ENCODE measurements at regions of chr6 and their contacts with region 1.

Region 1: GRCh38 chr6:137102851-137103492 is 58.2 kb upstream of the IL20RA start:
- DNase-seq: peak; percentile 100
- ATAC-seq: peak; percentile 82
- H3K4me3 ChIP-seq: no peak overlapping the region
- H3K27ac ChIP-seq: peak overlapping the region; percentile 98
- H3K4me1 ChIP-seq: peaks cover 73% of the 10 kb centered on the region
- H3K27me3 ChIP-seq: no peaks in the 10 kb centered on the region
- CTCF ChIP-seq: no peak
- EP300 ChIP-seq: peak; percentile 97
- POLR2A ChIP-seq: peak; percentile 65
- RAD21 ChIP-seq: peak; percentile 44

Region 2: GRCh38 chr6:137089305-137089704 is 13.7 kb before region 1 on chr6:
- CTCF ChIA-PET with region 1: interaction called, 71 read pairs
- POLR2A ChIA-PET with region 1: interaction called, 8 read pairs
- RAD21 ChIA-PET with region 1: interaction called, 126 read pairs
- SMC1A ChIA-PET with region 1: interaction called, 110 read pairs
- in situ Hi-C with region 1: no loop called
- intact Hi-C with region 1: no loop called
- DNase-seq: no peak
- ATAC-seq: no peak
- H3K4me3 ChIP-seq: no peak overlapping the region
- H3K27ac ChIP-seq: no peak overlapping the region
- H3K4me1 ChIP-seq: peaks cover 39% of the 10 kb centered on the region
- H3K27me3 ChIP-seq: no peaks in the 10 kb centered on the region
- CTCF ChIP-seq: no peak
- EP300 ChIP-seq: no peak
- POLR2A ChIP-seq: no peak
- RAD21 ChIP-seq: no peak

Region 3: DNA sequence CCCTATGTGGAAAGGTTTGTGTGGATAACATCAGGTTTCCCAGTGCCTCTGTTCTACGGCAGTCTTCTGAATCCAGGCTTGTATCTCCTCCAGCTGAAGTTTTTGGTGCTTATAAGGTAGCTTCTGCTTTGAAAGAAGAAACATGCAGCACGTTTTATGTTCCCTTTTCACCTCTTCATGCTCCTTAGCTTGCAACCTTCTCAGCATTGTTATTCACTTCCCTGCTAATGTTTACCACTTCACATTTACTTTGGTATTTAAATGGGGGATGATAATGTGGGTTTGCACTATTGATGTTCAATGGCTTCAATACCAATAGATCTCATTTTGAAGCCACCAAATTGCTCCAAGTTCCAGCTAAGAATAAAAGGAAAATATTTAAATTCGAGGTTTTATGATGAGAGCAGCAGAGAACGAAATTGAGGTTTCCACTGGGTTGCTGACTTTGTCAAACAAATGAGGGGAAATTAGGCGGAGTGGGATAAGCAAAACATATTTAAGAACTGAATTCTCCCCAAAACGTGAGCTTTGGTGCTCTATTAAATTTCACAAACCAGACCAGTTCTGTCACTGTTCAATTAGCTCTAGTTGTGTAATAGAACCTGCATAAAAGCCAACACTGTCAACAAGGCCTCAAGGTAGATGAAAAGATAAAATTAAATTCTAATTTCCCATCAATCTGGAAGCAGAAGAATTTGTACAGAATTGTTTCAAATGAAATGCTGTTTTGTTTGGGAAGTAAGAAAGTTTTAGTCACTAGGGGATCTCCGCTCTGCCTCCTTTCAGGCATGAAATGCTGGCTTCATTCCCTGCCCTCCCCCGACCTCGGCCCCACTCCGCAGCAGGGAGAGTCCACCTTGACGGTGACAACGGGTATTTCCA is 69.1 kb after region 1 on chr6:
- CTCF ChIA-PET with region 1: interaction called, 160 read pairs
- POLR2A ChIA-PET with region 1: interaction called, 62 read pairs
- RAD21 ChIA-PET with region 1: interaction called, 500 read pairs
- SMC1A ChIA-PET with region 1: interaction called, 293 read pairs
- in situ Hi-C with region 1: loop called (anchors 5 kb)
- intact Hi-C with region 1: no loop called
- DNase-seq: peak; percentile 68
- ATAC-seq: peak; percentile 86
- H3K4me3 ChIP-seq: 0 out of 2 replicates have a peak overlapping the region, but pooled peaks have one; percentile 1
- H3K27ac ChIP-seq: peak overlapping the region; percentile 84
- H3K4me1 ChIP-seq: peaks cover 51% of the 10 kb centered on the region
- H3K27me3 ChIP-seq: no peaks in the 10 kb centered on the region
- CTCF ChIP-seq: no peak
- EP300 ChIP-seq: peak; percentile 51 to 64; a peak in 1 of 4 replicates
- POLR2A ChIP-seq: 0 out of 2 replicates have a peak, but pooled peaks have one; percentile 31
- RAD21 ChIP-seq: peak; percentile 18; the same call in 1 of the 2 replicates

Region 4: DNA sequence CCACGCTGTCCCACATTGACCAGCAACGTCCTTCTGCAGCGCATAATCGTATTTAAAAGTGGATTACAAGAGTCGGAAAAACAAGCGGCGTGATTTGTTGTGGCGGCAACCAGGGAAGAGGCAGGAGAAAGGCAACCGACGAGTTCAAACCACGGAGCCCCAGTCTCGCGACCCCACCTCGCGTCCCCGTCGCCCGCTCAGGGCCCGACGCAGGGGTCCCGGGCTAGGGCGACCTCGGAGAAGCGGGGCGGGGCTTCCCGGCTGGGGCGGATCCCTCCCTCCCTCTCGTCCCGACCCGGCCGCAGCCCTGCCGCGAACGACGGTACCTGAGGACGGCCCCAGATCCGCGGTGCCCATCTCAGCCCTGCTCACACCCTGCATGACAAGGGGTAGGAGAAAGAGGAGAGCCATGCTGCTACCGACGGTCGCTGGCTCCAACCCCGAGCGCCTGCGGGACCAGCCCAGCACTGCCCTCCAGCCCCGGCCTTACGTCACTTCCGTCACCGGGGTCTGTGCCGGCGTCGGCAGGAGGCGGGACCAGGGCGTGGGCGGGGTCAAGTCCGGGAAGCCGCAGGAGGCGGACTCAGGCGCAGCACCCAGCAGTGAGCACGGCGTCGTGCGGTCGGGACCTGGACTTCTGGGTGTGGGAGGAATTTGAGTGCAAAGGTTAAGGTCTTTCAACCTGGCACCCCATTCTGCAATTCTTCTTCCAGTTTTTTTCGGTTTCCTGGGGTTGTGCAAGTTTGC is 116.1 kb after region 1 on chr6 and contains the start of gene IFNGR1:
- CTCF ChIA-PET with region 1: interaction called, 5 read pairs
- POLR2A ChIA-PET with region 1: interaction called, 12 read pairs
- RAD21 ChIA-PET with region 1: interaction called, 54 read pairs
- SMC1A ChIA-PET with region 1: interaction called, 89 read pairs
- in situ Hi-C with region 1: loop called (anchors 5 kb)
- intact Hi-C with region 1: loop called (anchors 1 kb)
- DNase-seq: peak; percentile 81
- ATAC-seq: peak; percentile 79
- H3K4me3 ChIP-seq: peak within 1 kb of the TSS; percentile 91
- H3K27ac ChIP-seq: peak within 1 kb of the TSS; percentile 94
- H3K4me1 ChIP-seq: peaks cover 15% of the 10 kb centered on the region
- H3K27me3 ChIP-seq: no peaks in the 10 kb centered on the region
- CTCF ChIP-seq: no peak
- EP300 ChIP-seq: no peak
- POLR2A ChIP-seq: peak; percentile 94
- RAD21 ChIP-seq: no peak
- polyA plus RNA-seq, gene IFNGR1: 182 to 296 TPM

Region 5: DNA sequence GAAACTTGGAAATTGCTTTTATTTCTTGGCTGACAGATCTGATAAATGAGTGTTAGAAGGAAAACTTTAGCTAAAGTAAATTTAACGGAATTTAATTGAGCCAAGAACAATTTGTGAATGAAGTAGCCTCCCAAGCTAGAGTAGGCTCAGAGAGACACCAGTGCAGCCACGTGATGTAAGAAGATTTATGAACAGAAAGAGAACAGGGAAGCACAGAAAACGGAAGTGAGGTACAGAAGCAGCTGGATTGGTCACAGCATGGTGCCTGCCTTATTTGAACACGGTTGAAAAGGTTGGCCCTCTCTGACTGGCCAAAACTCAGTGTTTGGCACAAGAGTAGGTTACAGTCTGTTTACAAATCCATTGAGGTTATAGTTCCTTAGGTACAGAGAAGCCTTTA is 145.7 kb after region 1 on chr6:
- CTCF ChIA-PET with region 1: no interaction called
- POLR2A ChIA-PET with region 1: no interaction called
- RAD21 ChIA-PET with region 1: interaction called, 23 read pairs
- SMC1A ChIA-PET with region 1: interaction called, 10 read pairs
- in situ Hi-C with region 1: no loop called
- intact Hi-C with region 1: no loop called
- DNase-seq: no peak
- ATAC-seq: peak; percentile 84
- H3K4me3 ChIP-seq: no peak overlapping the region
- H3K27ac ChIP-seq: peak overlapping the region; percentile 37; the same call in 1 of the 2 replicates
- H3K4me1 ChIP-seq: peaks cover 11% of the 10 kb centered on the region
- H3K27me3 ChIP-seq: no peaks in the 10 kb centered on the region
- CTCF ChIP-seq: no peak
- EP300 ChIP-seq: no peak
- POLR2A ChIP-seq: no peak
- RAD21 ChIP-seq: no peak

Region 6: DNA sequence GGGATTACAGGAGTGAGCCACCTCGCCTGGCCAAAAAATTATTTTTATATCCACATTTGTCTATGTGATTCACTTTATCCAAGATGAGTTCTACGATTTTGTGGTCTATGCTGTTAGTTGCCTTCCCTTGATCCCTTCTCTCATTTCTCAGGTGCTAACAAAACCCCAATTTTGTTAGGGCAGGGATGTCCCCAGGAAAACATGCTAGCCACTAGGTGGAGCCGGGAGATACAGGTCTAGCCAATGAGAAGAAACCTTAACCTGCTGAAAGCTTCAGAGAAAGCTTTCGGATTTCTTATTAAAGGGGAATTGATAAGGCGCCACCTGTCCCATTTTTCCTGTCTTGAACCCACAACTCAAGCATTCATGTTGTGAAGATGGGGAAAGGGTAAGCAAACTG is 558.6 kb after region 1 on chr6:
- CTCF ChIA-PET with region 1: no interaction called
- POLR2A ChIA-PET with region 1: interaction called, 3 read pairs
- RAD21 ChIA-PET with region 1: interaction called, 19 read pairs
- SMC1A ChIA-PET with region 1: interaction called, 6 read pairs
- in situ Hi-C with region 1: no loop called
- intact Hi-C with region 1: no loop called
- DNase-seq: no peak
- ATAC-seq: peak; percentile 69
- H3K4me3 ChIP-seq: no peak overlapping the region
- H3K27ac ChIP-seq: no peak overlapping the region
- H3K4me1 ChIP-seq: peaks cover 5% of the 10 kb centered on the region; the same call in 1 of the 2 replicates
- H3K27me3 ChIP-seq: no peaks in the 10 kb centered on the region
- CTCF ChIP-seq: peak; percentile 51 to 75 (median 68)
- EP300 ChIP-seq: no peak
- POLR2A ChIP-seq: no peak
- RAD21 ChIP-seq: peak; percentile 66

Measured in GM12878 (cell line).